Heart left ventricle (tissue), 16 donors: ENCODE measurements at regions of chr1 and their contacts with region 1.

Region 1: DNA sequence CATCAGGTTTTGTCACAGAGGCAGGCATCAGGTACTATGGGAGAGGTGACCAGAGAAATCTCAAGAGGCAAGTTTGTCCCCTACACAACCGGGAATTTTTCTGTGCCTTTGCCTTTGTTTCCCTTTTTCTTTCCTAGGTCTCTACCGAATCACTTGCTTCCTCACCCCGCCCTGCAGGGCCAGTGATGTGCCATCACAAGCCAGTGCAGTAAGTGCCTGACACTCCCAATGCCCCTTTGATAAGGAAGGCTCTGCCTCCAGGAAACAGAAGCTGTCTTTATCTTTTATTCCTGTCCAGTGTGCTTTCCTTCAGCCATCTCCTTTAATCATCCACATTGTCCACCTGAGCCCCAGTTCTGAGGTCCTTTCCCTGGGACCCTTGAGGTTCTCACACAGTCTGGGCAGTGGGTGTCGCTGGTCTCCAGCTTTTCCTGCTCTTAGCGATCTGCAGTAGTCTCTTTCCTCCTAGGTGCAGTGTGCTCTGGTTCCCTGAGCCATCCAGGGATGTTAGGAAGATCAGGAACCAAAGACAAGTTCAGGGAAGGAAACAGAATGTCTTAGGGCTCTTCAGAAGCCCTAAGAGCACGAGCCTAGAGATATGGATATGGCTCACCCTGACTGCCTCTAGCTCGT is 36.6 kb downstream of the GJA5 start:
- DNase-seq: peak; percentile 38 to 66 (median 51)
- ATAC-seq: peak; percentile 83 to 97 (median 94)
- H3K4me3 ChIP-seq: no peak overlapping the region
- H3K27ac ChIP-seq: no peak overlapping the region
- H3K4me1 ChIP-seq: peaks cover 0 to 11% (median 0%) of the 10 kb centered on the region in 12 donors
- H3K27me3 ChIP-seq: no peaks in the 10 kb centered on the region
- CTCF ChIP-seq: peak; percentile 35 to 79 (median 72)
- POLR2A ChIP-seq: no peak

Region 2: GRCh38 chr1:147757015-147758000 is 33.5 kb after region 1 on chr1:
- intact Hi-C with region 1: no loop called
- DNase-seq: no peak
- ATAC-seq: peak in 1 of 4 donors; percentile 19
- H3K4me3 ChIP-seq: no peak overlapping the region
- H3K27ac ChIP-seq: peak overlapping the region in 1 of 12 donors; percentile 24
- H3K4me1 ChIP-seq: peaks cover 0 to 48% (median 20%) of the 10 kb centered on the region in 12 donors
- H3K27me3 ChIP-seq: no peaks in the 10 kb centered on the region
- CTCF ChIP-seq: no peak
- POLR2A ChIP-seq: no peak

Region 3: GRCh38 chr1:147771231-147772125 is 47.7 kb after region 1 on chr1:
- intact Hi-C with region 1: loop called in 1 of 10 experiments (anchors 10 kb)
- DNase-seq: peak; percentile 78 to 89 (median 83)
- ATAC-seq: peak; percentile 96 to 98 (median 97)
- H3K4me3 ChIP-seq: peak overlapping the region in 9 of 12 donors; percentile 26 to 48 (median 38)
- H3K27ac ChIP-seq: peak overlapping the region in 11 of 12 donors; percentile 47 to 82 (median 59)
- H3K4me1 ChIP-seq: peaks cover 11 to 70% (median 42%) of the 10 kb centered on the region in 12 donors
- H3K27me3 ChIP-seq: no peaks in the 10 kb centered on the region
- CTCF ChIP-seq: no peak
- POLR2A ChIP-seq: no peak